ENCODE measurements at regions of chr6 and their contacts with region 1.

Region 1: DNA sequence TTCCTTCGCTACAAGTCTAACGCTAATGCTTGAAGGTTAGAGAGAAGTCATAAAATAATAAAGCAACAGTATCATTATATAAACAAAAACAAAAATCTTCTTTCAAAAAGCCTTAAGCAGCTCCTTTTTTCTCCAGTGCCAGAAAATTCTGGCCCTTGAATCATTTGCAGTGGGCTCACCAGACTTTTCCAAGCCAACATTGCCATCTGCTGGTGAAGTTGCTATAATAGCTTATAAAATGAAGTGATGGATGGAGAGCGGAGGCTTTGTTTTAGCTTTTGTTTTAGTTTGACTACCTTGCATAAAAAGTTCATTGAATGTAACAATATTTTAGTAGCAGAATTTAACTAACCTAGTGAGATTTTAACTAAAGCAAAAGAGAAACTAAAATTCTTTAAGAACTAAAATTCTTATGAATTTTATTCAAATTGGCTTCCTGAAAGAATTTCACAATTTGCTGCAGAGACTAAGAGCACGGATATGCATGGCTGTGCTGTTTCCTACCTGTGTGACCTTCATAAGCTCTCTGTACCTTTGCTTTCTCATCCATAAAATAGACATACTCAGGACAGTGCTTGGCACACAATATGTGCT is 44.8 kb upstream of the SLC2A12 start:
- DNase-seq: peak; percentile 57 to 66
- H3K4me3 ChIP-seq: no peak overlapping the region
- H3K27ac ChIP-seq: no peak overlapping the region
- H3K4me1 ChIP-seq: no peaks in the 10 kb centered on the region
- H3K27me3 ChIP-seq: no peaks in the 10 kb centered on the region
- CTCF ChIP-seq: peak in 5 of 6 experiments; percentile 30 to 79 (median 61)
- POLR2A ChIP-seq: no peak

Region 2: GRCh38 chr6:133837801-133838349 is 259.3 kb before region 1 on chr6:
- intact Hi-C with region 1: loop called (anchors 5 kb)
- DNase-seq: peak; percentile 74 to 81
- H3K4me3 ChIP-seq: peak overlapping the region in 2 of 3 donors; percentile 17 to 20
- H3K27ac ChIP-seq: no peak overlapping the region
- H3K4me1 ChIP-seq: no peaks in the 10 kb centered on the region
- H3K27me3 ChIP-seq: no peaks in the 10 kb centered on the region
- CTCF ChIP-seq: peak; percentile 60 to 83 (median 71)
- POLR2A ChIP-seq: no peak

Region 3: DNA sequence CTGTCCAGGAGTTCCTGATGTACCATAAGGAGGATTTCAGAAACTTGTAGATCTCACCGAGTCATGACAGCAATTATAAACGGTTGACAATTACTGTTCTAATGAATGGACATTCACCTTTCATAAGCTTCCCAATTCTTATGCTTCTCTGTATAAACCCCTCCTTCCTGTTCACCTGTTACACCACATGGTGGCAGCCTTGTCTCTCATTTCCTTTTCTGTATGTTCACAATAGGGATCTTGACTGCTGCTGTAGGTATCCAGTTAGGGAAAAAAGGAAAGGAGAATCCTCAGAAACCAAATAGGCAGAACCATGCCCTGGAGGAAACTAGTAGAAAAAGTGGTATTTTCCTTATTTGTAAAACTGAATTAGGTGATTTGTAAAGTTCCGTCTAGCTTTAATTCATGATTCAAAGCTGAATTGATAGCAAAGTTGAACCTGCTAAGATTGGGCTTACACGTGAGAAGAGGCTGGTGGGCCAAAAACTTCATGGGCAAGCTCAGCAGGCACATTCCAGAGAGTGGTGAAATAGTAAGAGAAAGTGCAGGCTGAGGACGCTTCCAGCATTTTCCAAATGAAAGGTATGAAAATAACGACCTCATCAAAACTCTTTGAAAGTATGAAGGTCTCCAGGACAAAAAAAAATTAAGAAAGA is 173.1 kb before region 1 on chr6:
- intact Hi-C with region 1: loop called (anchors 2 kb)
- DNase-seq: peak; percentile 68 to 70
- H3K4me3 ChIP-seq: no peak overlapping the region
- H3K27ac ChIP-seq: no peak overlapping the region
- H3K4me1 ChIP-seq: no peaks in the 10 kb centered on the region
- H3K27me3 ChIP-seq: no peaks in the 10 kb centered on the region
- CTCF ChIP-seq: peak; percentile 42 to 93 (median 83)
- POLR2A ChIP-seq: no peak

Measured in thyroid gland (tissue), 4 donors.